ENCODE measurements at regions of chr2 and their contacts with region 1.

Region 1: GRCh38 chr2:53751728-53752127 is 15.9 kb upstream of the CHAC2 start:
- DNase-seq: no peak
- ATAC-seq: peak; percentile 92
- H3K4me3 Mint-ChIP-seq: no peak overlapping the region
- H3K27ac Mint-ChIP-seq: no peak overlapping the region
- H3K4me1 Mint-ChIP-seq: peaks cover 29% of the 10 kb centered on the region
- H3K27me3 Mint-ChIP-seq: no peaks in the 10 kb centered on the region

Region 2: DNA sequence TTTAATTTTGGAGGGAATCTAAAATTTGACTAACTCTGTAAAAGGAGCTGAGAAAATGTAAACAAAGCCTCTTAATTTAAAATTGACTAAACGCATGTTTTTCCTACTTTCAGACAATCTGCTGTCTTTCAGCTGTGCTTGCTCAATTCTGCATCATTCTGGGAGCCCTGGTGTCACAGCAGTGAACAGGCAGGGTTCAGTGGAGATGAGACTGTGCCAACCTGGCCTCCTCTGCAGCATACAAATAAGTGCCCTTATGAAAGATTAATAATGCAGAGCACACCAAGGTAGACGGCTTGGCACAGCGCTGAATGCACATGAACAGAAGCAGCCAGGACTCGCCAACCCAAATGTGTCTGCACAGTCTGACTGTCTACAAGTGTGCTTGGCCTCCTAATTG is 206.1 kb before region 1 on chr2:
- CTCF ChIA-PET with region 1: no interaction called
- POLR2A ChIA-PET with region 1: no interaction called
- intact Hi-C with region 1: no loop called
- DNase-seq: no peak
- ATAC-seq: no peak
- H3K4me3 Mint-ChIP-seq: no peak overlapping the region
- H3K27ac Mint-ChIP-seq: no peak overlapping the region
- H3K4me1 Mint-ChIP-seq: no peaks in the 10 kb centered on the region
- H3K27me3 Mint-ChIP-seq: no peaks in the 10 kb centered on the region

Region 3: DNA sequence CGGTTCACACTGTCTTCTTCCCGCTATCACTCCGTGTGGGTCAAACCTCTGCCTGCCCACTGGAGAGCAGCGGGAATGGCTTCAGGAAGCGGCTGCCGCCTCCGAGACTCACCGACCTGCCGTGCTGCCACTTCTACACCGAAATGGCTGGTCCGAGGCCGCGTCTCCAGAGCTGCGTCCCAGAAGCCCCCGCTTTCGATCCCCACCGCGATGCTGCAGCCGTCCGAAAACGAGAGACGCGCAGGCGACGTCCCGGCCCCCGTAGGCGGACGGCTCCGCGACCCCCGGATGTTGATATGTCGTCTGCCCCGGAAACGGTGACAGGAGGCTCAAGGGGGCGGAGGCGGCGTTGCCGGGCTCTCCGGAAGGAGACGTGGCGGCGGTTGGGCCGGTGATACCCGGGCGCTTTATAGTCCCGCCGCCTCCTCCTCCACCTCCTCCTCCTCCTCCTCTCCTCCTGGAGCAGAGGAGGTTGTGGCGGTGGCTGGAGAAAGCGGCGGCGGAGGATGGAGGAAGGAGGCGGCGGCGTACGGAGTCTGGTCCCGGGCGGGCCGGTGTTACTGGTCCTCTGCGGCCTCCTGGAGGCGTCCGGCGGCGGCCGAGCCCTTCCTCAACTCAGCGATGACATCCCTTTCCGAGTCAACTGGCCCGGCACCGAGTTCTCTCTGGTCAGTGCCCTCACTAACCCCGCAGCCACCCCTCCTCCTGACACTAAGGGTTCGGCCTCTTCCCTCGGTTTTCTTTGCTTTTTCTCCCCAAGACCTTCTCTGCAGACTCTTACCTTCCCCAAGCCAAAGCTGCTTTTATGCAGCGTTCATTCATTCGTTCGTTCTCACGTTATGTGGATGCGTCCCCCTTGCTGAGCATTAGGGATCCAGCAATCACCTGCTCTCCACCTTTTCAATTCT is 35.2 kb after region 1 on chr2 and contains the starts of genes ASB3 and ERLEC1:
- CTCF ChIA-PET with region 1: no interaction called
- POLR2A ChIA-PET with region 1: no interaction called
- intact Hi-C with region 1: loop called (anchors 1 to 5 kb)
- DNase-seq: peak; percentile 93
- ATAC-seq: peak; percentile 91
- H3K4me3 Mint-ChIP-seq: peak within 1 kb of the TSS; percentile 100
- H3K27ac Mint-ChIP-seq: peak within 1 kb of the TSS; percentile 95
- H3K4me1 Mint-ChIP-seq: peaks cover 47% of the 10 kb centered on the region
- H3K27me3 Mint-ChIP-seq: no peaks in the 10 kb centered on the region
- total RNA-seq, gene ASB3: 17.3 to 23.4 TPM
- total RNA-seq, gene ERLEC1: 18.3 to 20.5 TPM

Measured in activated CD4-positive, alpha-beta T cell treated with anti-CD3 and anti-CD28 coated beads for 36 hours (primary cell).